ENCODE measurements at regions of chr9 and their contacts with region 1.

Region 1: DNA sequence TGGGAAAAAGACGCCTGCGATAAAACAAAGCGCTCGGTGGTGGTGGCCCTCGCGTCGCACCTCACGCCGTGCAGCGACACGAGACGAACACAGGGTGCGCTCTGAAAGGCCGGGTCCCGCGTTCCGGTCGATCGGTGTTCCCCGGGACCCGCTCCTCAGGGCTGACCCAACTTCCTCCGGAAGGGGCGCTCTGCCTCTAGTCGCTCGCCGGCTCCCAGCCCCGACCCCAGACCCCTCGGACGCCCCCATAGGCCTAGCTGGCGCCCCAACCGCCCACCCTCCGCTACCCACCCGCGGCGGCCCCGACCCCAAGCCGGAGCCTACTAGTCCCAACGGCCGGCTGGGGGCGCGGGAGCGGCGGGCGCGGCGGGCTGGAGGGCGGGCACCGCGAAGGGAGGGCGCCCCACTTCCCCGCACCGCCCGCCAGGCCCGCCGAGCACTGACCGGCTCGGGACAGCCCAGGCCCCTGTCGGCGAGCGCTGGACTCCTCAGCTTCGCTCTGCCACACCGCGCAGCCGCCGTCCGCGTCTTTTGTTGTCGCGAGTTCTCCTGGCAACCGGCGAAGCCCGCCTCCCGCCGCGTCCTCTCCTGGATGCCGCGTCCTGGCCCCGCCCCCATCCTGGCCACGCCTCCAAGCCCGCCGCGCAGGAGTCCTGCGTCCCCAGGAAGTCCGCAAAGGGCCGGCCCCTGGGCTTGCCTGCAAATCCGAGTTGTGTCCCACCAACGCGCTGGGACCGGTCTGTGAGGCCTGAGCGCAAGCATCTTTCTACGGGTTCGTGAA is at the start of gene KIF27:
- H3K4me3 Mint-ChIP-seq: peak within 1 kb of the TSS; percentile 79
- H3K27ac Mint-ChIP-seq: peak within 1 kb of the TSS; percentile 90
- H3K4me1 Mint-ChIP-seq: peaks cover 25% of the 10 kb centered on the region
- H3K27me3 Mint-ChIP-seq: no peaks in the 10 kb centered on the region

Region 2: GRCh38 chr9:83622939-83623678 is 298.0 kb before region 1 on chr9 and contains the start of gene IDNK:
- intact Hi-C with region 1: loop called (anchors 2 kb)
- H3K4me3 Mint-ChIP-seq: peak within 1 kb of the TSS; percentile 89
- H3K27ac Mint-ChIP-seq: peak within 1 kb of the TSS; percentile 97
- H3K4me1 Mint-ChIP-seq: peaks cover 26% of the 10 kb centered on the region
- H3K27me3 Mint-ChIP-seq: peaks cover 6% of the 10 kb centered on the region

Region 3: GRCh38 chr9:83765376-83765775 is 155.7 kb before region 1 on chr9:
- intact Hi-C with region 1: no loop called
- H3K4me3 Mint-ChIP-seq: no peak overlapping the region
- H3K27ac Mint-ChIP-seq: no peak overlapping the region
- H3K4me1 Mint-ChIP-seq: no peaks in the 10 kb centered on the region
- H3K27me3 Mint-ChIP-seq: no peaks in the 10 kb centered on the region

Region 4: GRCh38 chr9:84146893-84147710 is 226.0 kb after region 1 on chr9:
- intact Hi-C with region 1: no loop called
- H3K4me3 Mint-ChIP-seq: no peak overlapping the region
- H3K27ac Mint-ChIP-seq: no peak overlapping the region
- H3K4me1 Mint-ChIP-seq: peaks cover 14% of the 10 kb centered on the region
- H3K27me3 Mint-ChIP-seq: peaks cover 7% of the 10 kb centered on the region